ENCODE measurements at regions of chr9 and their contacts with region 1.

Region 1: DNA sequence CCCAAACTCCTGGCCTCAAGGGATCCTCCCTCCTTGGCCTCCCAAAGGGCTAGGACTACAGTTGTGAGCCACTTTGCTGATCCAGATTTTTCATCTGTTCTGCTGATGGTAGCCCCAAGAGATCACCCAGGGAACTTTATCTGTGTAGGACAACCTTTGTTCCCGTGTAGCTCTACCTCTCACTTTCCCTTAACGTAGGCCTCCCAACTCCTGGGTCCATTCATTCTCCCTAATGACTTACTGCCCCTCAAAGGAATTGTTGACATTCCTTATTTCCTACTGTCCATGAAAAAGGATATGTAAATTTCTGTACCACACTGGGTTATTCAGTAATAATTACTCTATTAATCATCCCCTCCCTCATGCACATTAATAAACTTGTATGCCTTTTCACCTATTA is 51.0 kb upstream of the PHF24 start:
- DNase-seq: no peak
- H3K4me3 ChIP-seq: no peak overlapping the region
- H3K27ac ChIP-seq: no peak overlapping the region
- H3K4me1 ChIP-seq: no peaks in the 10 kb centered on the region
- H3K27me3 ChIP-seq: peaks cover 0 to 6% of the 10 kb centered on the region in 2 donors
- CTCF ChIP-seq: no peak

Region 2: DNA sequence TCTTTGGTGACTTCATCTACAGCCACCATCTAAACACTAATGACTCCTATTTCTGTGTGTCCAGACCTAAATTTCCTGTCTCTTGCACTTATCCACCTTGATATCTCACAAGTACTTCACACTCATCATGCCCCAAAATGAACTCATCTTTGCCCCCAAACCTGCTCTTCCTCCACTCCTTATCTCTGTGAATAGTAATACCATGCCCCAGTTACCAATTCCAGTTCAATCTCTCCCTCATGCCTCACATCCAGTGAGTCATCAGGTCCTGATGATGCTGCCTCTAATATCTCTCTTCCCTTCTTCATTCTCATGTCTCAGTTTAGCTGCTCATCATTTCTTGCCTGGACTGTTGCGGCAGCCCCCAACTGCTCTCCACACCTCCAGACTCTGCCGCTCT is 67.6 kb after region 1 on chr9:
- intact Hi-C with region 1: loop called (anchors 5 kb)
- DNase-seq: no peak
- H3K4me3 ChIP-seq: no peak overlapping the region
- H3K27ac ChIP-seq: no peak overlapping the region
- H3K4me1 ChIP-seq: no peaks in the 10 kb centered on the region
- H3K27me3 ChIP-seq: peaks cover 0 to 8% of the 10 kb centered on the region in 2 donors
- CTCF ChIP-seq: no peak

Region 3: DNA sequence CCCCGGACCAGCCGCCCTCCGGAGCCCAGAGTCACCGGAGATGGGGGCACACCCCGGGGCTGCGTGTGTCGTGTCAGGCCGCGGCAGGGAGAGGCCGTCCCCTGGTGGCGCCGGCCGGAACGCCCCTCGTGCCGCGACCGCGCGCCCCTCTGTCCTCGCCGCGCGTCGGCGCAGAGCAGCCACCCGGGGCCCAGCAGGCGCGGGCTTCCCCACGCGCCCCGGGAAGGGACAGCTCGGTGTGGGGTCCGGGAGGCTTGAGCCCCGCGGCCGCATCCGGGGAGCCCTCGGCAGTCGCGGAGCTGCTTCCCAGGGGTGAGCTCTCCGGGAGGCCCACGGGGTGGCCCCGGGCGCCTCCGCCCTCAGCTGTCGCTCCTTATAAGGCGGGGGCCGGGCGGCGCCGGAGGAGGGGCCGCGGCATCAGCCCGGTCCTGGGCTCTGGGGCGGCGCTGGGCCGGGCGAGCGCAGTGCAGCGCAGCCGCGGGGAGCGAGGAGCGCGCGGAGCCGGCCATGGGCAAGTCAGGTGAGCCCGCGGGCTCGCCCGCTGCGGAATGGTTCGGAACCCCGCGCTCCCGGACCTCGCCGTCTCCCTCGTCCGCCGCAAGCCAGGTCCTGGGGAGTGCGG is 1229.3 kb after region 1 on chr9 and contains the start of gene GLIPR2:
- intact Hi-C with region 1: no loop called
- DNase-seq: peak; percentile 83 to 92
- H3K4me3 ChIP-seq: peak within 1 kb of the TSS; percentile 85 to 97
- H3K27ac ChIP-seq: peak within 1 kb of the TSS; percentile 85 to 89
- H3K4me1 ChIP-seq: peaks cover 0 to 51% (median 21%) of the 10 kb centered on the region in 4 donors
- H3K27me3 ChIP-seq: no peaks in the 10 kb centered on the region
- CTCF ChIP-seq: peak; percentile 25 to 39